Activated CD4-positive, alpha-beta T cell treated with anti-CD3 and anti-CD28 coated beads for 36 hours (primary cell): ENCODE measurements at regions of chr12 and their contacts with region 1.

Region 1: DNA sequence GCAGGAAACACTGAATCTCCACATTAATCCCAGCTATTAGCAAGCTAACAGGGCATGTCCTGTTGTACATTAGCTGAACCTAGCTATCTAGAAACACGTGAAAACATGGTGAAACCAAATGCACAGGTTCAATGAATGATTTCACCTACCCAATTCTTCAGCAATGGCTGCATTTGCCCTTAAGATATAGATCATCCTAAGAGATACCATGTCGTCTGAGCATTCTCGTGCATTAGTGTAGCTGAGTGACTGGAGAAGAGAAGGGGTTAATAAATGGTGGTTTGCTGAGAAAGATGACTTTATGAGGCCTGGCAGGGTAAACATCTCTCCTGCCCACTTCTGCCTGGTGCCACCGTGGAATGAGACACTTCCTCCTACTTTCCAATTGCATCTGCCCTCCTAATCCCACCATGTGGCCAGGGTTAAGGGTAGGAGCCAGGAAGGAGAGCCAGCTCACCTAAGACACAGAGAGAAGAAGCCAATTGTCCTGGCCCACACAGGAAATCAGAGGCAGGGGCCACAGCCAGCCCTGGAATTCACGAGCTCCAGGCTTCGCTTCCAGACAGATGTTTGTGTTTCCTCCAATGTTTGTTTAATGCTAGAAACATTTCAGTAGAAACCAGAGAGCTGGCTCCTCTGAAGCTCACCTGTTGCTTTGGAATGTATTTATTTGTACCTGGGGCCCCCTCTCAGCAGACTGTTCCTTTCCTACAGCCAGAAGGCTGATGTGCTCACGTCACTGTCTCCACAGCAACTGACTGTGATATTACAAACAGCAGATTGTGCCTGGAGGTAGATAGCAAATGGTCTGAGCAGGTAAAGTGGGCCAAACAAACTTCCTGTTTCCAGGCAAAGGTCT is 126.0 kb upstream of the PARP11 start:
- DNase-seq: no peak
- ATAC-seq: no peak
- H3K4me3 Mint-ChIP-seq: no peak overlapping the region
- H3K27ac Mint-ChIP-seq: no peak overlapping the region
- H3K4me1 Mint-ChIP-seq: peaks cover 16% of the 10 kb centered on the region
- H3K27me3 Mint-ChIP-seq: no peaks in the 10 kb centered on the region

Region 2: GRCh38 chr12:3863756-3864329 is 135.4 kb before region 1 on chr12:
- CTCF ChIA-PET with region 1: no interaction called
- POLR2A ChIA-PET with region 1: no interaction called
- intact Hi-C with region 1: no loop called
- DNase-seq: no peak
- ATAC-seq: no peak
- H3K4me3 Mint-ChIP-seq: no peak overlapping the region
- H3K27ac Mint-ChIP-seq: no peak overlapping the region
- H3K4me1 Mint-ChIP-seq: peaks cover 19% of the 10 kb centered on the region
- H3K27me3 Mint-ChIP-seq: no peaks in the 10 kb centered on the region

Region 3: GRCh38 chr12:3988519-3989448 is 10.4 kb before region 1 on chr12:
- CTCF ChIA-PET with region 1: interaction called, 13 read pairs
- POLR2A ChIA-PET with region 1: interaction called, 3 read pairs
- intact Hi-C with region 1: no loop called
- DNase-seq: peak; percentile 60
- ATAC-seq: peak; percentile 71
- H3K4me3 Mint-ChIP-seq: peak overlapping the region; percentile 11
- H3K27ac Mint-ChIP-seq: peak overlapping the region; percentile 76
- H3K4me1 Mint-ChIP-seq: peaks cover 35% of the 10 kb centered on the region
- H3K27me3 Mint-ChIP-seq: no peaks in the 10 kb centered on the region

Region 4: DNA sequence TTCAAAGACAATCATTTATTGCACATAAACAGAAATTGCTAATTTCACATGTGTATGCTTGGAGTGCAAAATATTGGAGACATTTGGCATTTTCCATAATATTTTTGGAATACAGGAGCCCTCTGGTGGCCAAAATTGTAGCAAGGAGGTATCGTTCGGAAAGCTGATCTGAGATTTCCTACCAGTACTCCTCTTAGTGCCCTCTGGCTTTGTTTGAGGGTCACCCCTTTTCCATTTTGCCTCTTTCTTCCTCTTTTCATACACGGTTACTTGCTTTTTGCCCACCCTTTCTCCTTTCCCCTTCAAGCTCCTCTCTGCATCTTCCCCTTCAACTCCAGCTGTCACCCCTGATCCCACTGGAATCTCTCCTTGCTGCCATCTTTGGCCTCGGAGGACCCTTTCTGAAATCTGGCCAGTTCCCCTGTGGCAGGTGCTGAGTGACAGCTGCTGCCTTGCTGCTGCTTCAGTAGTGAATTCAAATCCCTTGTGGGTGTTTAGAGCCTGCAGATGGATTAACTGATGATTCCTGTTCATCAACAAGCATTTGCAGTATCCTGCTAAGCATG is 38.6 kb after region 1 on chr12:
- CTCF ChIA-PET with region 1: interaction called, 5 read pairs
- POLR2A ChIA-PET with region 1: no interaction called
- intact Hi-C with region 1: loop called in 1 of 2 experiments (anchors 2 kb)
- DNase-seq: peak; percentile 35
- ATAC-seq: no peak
- H3K4me3 Mint-ChIP-seq: no peak overlapping the region
- H3K27ac Mint-ChIP-seq: no peak overlapping the region
- H3K4me1 Mint-ChIP-seq: peaks cover 5% of the 10 kb centered on the region
- H3K27me3 Mint-ChIP-seq: no peaks in the 10 kb centered on the region